Dorsolateral prefrontal cortex (tissue), 120 donors: ENCODE measurements at regions of chr17 and their contacts with region 1.

Region 1: DNA sequence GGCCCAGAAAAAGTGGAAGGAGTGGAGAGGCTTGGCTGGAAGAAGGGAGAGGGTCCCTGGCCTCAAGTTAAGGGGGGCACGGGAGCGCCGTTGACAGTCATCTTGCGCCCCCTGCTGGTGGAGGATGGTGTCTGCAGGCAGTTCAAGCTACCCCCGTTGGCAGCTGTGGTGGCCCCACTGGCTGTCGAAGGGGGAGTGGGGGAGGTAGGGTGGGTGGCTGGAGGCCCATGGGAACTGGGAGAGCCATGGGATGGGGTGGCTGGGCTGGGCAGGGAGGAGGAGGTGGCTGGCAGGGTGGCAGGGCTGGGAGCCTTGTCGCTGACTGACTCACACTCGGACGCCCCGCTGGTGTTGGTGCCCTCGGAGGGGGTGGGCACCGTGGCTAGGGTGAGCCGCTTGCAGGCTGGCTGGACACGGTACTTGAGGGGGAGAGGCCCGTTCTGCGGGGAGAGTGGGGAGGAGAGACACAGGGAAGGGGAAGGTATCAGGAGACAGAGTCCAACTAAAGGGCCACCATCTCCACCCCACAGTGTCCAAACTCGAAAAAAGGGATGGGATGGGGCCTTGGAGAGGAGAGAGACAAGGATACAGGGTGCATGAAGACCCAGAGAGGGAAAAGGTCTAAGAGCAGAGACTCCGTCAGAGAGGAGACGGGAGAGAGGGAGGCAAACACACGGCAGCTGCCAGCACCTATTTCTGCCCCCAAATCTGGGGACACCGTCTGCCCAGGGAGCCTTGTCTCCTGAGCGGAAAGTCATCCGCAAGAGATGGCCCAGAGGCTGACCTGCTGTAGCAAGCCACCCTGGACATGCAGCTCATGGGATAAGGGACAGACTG is 5.2 kb downstream of the CISD3 start:
- DNase-seq: peak in 8 of 10 donors; percentile 54 to 71 (median 68)
- H3K4me3 ChIP-seq: no peak overlapping the region
- H3K27ac ChIP-seq: peak overlapping the region in 10 of 59 donors; percentile 5 to 46 (median 25)
- H3K27me3 ChIP-seq: no peaks in the 10 kb centered on the region
- CTCF ChIP-seq: peak; percentile 58 to 95 (median 88)

Region 2: DNA sequence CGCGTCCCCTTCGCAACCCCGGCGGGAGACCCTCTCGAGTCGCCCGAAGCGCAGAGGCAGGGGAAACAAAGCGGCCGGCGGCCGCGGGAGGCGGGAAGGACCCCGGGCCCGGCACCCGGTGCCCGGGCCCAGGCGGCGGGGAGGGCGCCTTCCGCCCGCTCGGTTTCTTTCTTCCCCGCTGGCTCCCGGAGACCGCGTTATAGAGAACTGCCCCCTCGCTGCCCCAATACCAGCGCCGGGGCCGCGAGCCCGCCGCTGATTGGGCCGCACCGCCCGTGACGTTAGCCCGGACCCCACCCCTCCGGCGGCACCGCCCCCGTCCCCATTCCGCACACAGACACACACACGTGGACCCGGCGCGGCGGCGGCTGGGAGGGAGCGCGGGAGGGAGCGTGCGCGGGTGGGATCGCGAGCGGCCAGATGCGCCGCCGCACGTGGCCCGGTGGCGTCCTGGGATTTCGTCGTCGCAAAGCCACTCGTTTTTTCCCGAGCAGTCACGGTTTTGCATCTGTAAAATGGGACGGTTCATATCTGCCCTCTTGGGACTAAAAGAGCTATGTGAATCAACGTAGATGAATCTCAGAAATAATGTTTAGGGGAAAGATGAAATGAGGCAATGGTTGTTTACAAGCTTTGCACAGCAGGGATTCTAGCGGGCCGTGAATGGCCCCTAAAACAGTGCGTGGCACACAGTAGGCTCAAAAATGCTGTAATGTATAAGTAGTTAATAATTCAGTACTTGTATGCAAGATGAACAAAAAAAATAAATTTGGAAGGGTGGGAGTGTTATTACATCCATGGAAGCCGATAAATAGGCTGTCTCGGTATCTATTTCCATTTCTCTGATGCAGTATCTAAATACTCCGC is 60.4 kb before region 1 on chr17 and contains the start of gene EPOP:
- intact Hi-C with region 1: loop called (anchors 1 to 2 kb)
- DNase-seq: peak; percentile 65 to 95 (median 90)
- H3K4me3 ChIP-seq: peak within 1 kb of the TSS; percentile 39 to 80 (median 67)
- H3K27ac ChIP-seq: peak within 1 kb of the TSS in 46 of 59 donors; percentile 10 to 88 (median 42)
- H3K27me3 ChIP-seq: peaks cover 0 to 12% (median 0%) of the 10 kb centered on the region in 45 donors
- CTCF ChIP-seq: peak in 22 of 56 donors; percentile 4 to 53 (median 26)
- total RNA-seq, gene EPOP: 4.4 to 32.8 (median 13.7) TPM

Region 3: GRCh38 chr17:38719943-38720641 is 15.3 kb before region 1 on chr17:
- intact Hi-C with region 1: no loop called
- DNase-seq: no peak
- H3K4me3 ChIP-seq: no peak overlapping the region
- H3K27ac ChIP-seq: peak overlapping the region in 27 of 59 donors; percentile 1 to 67 (median 40)
- H3K27me3 ChIP-seq: no peaks in the 10 kb centered on the region
- CTCF ChIP-seq: no peak